ENCODE measurements at regions of chr6 and their contacts with region 1.

Region 1: DNA sequence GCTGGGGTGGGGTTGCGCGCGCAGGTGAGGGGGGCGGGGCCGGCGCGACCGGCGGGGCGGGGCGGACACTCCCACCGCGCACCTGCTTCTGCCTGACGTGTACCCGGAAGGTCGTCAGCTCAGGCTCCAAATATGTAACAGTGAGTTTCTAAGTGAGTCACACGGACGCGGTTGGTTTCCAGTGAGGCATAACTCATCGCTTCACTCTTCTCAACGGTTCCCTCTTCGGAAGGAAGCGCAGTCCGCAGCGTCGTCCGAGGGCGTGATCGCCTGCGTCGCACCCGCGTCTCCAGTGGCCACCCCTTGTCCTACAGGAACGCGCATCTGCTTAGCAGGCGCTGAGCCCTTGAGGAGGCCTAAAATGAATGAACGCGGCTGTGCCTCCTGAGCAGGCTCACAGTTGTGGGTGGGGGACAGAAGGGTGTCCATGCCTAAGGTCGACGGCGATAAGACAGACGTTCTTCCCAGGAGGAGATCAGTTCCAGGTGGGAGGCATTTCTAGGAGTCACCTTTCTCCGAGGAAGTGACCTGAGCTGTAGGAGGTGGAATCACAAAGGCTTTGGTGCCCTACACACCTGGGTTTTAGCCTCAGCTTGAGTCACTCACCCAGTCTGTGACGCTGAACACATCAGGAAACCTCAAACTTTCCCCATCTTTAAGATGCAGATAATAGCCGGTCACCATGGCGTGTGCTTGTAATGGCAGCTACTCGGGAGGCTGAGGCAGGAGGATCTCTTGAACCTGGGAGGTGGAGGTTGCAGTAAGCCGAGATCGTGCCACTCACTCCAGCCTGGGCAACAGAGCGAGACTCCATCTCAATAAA is 50.9 kb upstream of the EZR start:
- DNase-seq: no peak
- ATAC-seq: peak; percentile 92
- H3K4me3 Mint-ChIP-seq: peak overlapping the region; percentile 90
- H3K27ac Mint-ChIP-seq: peak overlapping the region; percentile 98
- H3K4me1 Mint-ChIP-seq: peaks cover 24% of the 10 kb centered on the region
- H3K27me3 Mint-ChIP-seq: no peaks in the 10 kb centered on the region

Region 2: GRCh38 chr6:157059781-157060180 is 1810.3 kb before region 1 on chr6:
- POLR2A ChIA-PET with region 1: no interaction called
- DNase-seq: no peak
- ATAC-seq: no peak
- H3K4me3 Mint-ChIP-seq: no peak overlapping the region
- H3K27ac Mint-ChIP-seq: no peak overlapping the region
- H3K4me1 Mint-ChIP-seq: peaks cover 28% of the 10 kb centered on the region
- H3K27me3 Mint-ChIP-seq: no peaks in the 10 kb centered on the region

Region 3: GRCh38 chr6:158194487-158195280 is 675.4 kb before region 1 on chr6:
- POLR2A ChIA-PET with region 1: no interaction called
- DNase-seq: no peak
- ATAC-seq: no peak
- H3K4me3 Mint-ChIP-seq: no peak overlapping the region
- H3K27ac Mint-ChIP-seq: no peak overlapping the region
- H3K4me1 Mint-ChIP-seq: no peaks in the 10 kb centered on the region
- H3K27me3 Mint-ChIP-seq: no peaks in the 10 kb centered on the region

Region 4: GRCh38 chr6:158789434-158789917 is 80.6 kb before region 1 on chr6:
- POLR2A ChIA-PET with region 1: interaction called, 17 read pairs
- DNase-seq: peak; percentile 58
- ATAC-seq: peak; percentile 100
- H3K4me3 Mint-ChIP-seq: peak overlapping the region; percentile 80
- H3K27ac Mint-ChIP-seq: peak overlapping the region; percentile 91
- H3K4me1 Mint-ChIP-seq: peaks cover 44% of the 10 kb centered on the region
- H3K27me3 Mint-ChIP-seq: no peaks in the 10 kb centered on the region

Region 5: DNA sequence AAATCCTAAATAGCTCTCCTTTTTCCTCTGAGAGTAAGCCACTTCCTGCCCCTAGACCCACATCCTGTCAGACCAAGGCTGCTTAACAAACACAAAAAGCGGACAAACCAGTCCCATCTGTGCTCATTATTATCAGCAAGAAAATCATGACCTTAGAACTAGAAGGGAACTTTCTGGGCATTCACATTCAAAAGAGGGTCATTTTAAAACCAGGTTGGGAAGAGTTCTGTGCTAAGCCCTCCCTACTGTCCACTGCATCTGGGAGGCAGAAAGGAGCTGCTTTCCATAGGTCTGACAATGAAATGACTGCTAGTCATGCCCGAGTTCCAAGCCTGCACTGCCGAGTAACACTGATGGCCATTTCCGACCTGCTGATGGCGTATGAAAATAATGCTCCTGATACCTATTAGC is 66.3 kb before region 1 on chr6:
- POLR2A ChIA-PET with region 1: interaction called, 16 read pairs
- DNase-seq: no peak
- ATAC-seq: peak; percentile 80
- H3K4me3 Mint-ChIP-seq: peak overlapping the region; percentile 72
- H3K27ac Mint-ChIP-seq: peak overlapping the region; percentile 79
- H3K4me1 Mint-ChIP-seq: peaks cover 78% of the 10 kb centered on the region
- H3K27me3 Mint-ChIP-seq: no peaks in the 10 kb centered on the region

Region 6: DNA sequence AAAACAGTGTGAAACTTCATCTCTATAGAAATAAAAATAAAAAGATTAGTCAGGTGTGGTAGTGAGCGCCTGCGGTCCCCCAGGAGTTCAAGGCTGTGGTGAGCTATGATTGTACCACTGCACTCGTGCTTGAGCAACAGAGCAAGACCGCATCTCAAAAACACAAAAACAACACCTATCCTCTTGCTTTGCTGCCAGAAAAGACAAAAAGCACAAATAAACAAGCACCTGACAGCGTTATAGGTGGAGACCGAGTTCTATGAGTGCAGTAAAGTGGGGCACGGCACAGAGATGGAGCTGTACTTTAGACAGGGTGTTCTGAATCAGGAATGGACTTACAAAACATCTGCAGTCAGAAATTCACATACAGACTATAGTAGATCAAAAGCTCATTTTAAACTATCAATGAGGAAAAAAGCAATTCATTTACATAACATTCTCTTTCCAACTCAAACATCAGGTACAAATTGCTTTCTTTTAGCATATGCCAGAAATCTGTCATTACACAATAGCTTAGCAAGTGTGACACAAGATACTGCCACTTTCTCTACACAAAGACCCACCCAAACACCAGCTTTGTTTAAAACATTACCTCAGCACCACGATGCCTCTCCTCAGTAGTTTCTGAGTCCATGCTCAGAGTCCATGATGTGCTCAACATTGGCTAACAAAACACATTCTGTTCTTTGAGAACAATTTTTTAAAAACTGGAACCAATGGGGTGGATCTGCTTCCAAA is 60.9 kb before region 1 on chr6:
- POLR2A ChIA-PET with region 1: interaction called, 16 read pairs
- DNase-seq: no peak
- ATAC-seq: peak; percentile 11
- H3K4me3 Mint-ChIP-seq: peak overlapping the region; percentile 23
- H3K27ac Mint-ChIP-seq: peak overlapping the region; percentile 49
- H3K4me1 Mint-ChIP-seq: peaks cover 84% of the 10 kb centered on the region
- H3K27me3 Mint-ChIP-seq: no peaks in the 10 kb centered on the region

Region 7: DNA sequence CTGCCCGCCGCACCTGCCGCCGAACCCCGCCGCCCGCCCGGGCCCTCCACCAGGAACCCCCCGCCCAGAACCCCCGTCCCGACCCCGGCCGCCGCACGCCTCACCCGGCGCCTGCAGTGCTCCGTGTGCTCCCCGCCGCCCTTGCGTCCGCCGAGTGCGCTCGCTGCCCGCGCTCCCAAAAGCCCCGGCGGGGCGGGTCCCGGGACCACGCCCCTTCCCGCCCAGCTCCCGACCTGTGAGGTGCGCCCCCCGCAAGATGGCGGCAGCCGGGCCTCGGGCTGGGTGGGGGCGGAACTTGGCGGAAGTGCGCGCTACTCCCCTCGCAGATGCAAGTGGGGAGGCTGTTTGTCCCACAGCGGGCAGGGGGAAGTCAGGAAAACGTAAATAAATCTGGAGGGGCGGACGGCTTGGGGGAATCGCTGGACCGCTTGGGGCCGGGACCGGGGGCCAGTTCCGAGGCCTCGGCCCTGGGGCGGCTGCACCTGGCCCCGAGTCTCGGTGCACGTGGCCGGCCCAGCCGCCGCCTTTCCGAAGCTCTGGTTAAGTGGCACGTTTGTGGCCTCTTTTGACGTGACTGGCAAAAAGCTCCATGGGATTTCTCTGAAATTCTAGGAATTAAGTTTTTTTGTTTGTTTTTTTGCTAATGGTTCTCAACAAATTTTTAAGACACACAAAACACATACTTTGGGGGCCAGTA is 50.7 kb before region 1 on chr6 and contains the start of gene EZR:
- POLR2A ChIA-PET with region 1: interaction called, 49 read pairs
- DNase-seq: peak; percentile 84
- ATAC-seq: peak; percentile 64
- H3K4me3 Mint-ChIP-seq: peak within 1 kb of the TSS; percentile 88
- H3K27ac Mint-ChIP-seq: peak within 1 kb of the TSS; percentile 92
- H3K4me1 Mint-ChIP-seq: peaks cover 35% of the 10 kb centered on the region
- H3K27me3 Mint-ChIP-seq: no peaks in the 10 kb centered on the region
- total RNA-seq, gene EZR: 235 to 257 TPM

Region 8: DNA sequence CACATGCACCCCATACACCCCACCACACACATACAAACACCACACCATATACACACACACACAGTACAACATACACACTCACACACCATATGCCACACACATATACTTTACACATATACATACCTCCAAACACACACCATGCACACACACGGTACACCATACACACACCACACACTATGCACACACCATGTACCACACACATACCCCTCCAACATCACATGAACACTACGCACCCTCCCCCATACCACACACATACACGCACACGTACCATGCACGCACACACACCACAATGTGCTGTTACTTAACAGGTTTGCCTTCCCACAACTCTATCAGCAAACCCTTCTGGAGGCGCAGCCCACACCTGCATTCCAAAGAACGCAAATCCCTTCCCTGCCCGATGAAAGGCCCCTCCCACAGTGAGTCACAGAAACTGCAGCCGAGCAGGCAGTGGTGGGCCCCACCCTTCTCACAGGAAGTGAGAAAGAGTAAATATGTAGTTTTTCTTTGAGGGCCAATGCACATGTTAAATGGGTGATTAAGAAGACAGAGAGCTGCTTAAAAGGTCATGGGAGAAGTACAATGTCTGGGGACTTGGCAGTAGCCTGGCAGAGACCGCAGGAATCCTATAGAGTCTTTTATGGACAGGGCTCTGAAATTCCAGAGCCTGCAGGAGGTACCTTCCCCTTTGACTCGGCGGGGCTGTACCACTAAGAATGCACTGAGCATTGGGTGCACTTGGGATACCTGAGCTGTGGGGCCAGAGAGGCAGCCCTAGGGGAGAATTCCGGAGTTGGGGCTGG is 16.8 kb before region 1 on chr6:
- POLR2A ChIA-PET with region 1: interaction called, 61 read pairs
- DNase-seq: peak; percentile 69
- ATAC-seq: peak; percentile 88
- H3K4me3 Mint-ChIP-seq: no peak overlapping the region
- H3K27ac Mint-ChIP-seq: no peak overlapping the region
- H3K4me1 Mint-ChIP-seq: peaks cover 12% of the 10 kb centered on the region
- H3K27me3 Mint-ChIP-seq: no peaks in the 10 kb centered on the region

Region 9: GRCh38 chr6:159104163-159104925 is 234.3 kb after region 1 on chr6:
- POLR2A ChIA-PET with region 1: interaction called, 12 read pairs
- DNase-seq: peak; percentile 85
- ATAC-seq: peak; percentile 61
- H3K4me3 Mint-ChIP-seq: peak overlapping the region; percentile 70
- H3K27ac Mint-ChIP-seq: peak overlapping the region; percentile 91
- H3K4me1 Mint-ChIP-seq: peaks cover 57% of the 10 kb centered on the region
- H3K27me3 Mint-ChIP-seq: no peaks in the 10 kb centered on the region

Region 10: DNA sequence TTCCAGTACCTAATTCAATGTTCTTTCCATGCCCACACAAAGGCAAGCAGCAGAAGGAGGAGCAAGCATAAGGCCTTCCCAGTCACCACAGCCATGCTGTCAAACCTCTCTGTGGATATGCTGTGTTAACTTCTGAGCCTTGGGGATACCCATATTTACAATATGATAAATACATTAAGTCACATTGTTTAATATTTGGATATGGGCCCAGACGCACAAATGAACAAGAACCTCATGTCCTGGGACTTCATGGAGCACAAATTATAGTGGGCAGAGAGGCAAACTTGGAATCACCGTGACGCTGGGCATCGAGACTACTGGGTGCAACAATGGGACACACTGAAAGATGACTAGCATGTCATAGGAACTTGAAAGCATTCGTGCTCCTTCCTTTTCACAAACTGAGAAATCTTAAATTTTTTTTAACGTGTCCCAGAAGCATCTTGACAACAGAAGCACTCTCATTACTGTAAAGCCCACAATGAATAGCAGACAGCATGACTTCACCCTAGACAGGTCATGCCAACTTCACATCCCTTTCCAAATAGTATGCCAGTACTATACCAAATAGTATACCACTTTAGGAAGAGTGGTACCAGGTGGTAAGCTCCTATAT is 807.0 kb after region 1 on chr6:
- POLR2A ChIA-PET with region 1: no interaction called
- DNase-seq: no peak
- ATAC-seq: no peak
- H3K4me3 Mint-ChIP-seq: no peak overlapping the region
- H3K27ac Mint-ChIP-seq: no peak overlapping the region
- H3K4me1 Mint-ChIP-seq: peaks cover 6% of the 10 kb centered on the region
- H3K27me3 Mint-ChIP-seq: no peaks in the 10 kb centered on the region